Activated CD4-positive, alpha-beta memory T cell treated with anti-CD3 and anti-CD28 coated beads, Interleukin-2, amount 10 ng/mL, durations not matched to agents 7 days and 5 days (primary cell): ENCODE measurements at regions of chr1 and their contacts with region 1.

Region 1: GRCh38 chr1:234599617-234600417 is 10.2 kb downstream of the IRF2BP2 start:
- DNase-seq: peak; percentile 77
- H3K4me3 Mint-ChIP-seq: peak overlapping the region; percentile 85
- H3K27ac Mint-ChIP-seq: peak overlapping the region; percentile 96
- H3K4me1 Mint-ChIP-seq: peaks cover 52% of the 10 kb centered on the region
- H3K27me3 Mint-ChIP-seq: no peaks in the 10 kb centered on the region

Region 2: DNA sequence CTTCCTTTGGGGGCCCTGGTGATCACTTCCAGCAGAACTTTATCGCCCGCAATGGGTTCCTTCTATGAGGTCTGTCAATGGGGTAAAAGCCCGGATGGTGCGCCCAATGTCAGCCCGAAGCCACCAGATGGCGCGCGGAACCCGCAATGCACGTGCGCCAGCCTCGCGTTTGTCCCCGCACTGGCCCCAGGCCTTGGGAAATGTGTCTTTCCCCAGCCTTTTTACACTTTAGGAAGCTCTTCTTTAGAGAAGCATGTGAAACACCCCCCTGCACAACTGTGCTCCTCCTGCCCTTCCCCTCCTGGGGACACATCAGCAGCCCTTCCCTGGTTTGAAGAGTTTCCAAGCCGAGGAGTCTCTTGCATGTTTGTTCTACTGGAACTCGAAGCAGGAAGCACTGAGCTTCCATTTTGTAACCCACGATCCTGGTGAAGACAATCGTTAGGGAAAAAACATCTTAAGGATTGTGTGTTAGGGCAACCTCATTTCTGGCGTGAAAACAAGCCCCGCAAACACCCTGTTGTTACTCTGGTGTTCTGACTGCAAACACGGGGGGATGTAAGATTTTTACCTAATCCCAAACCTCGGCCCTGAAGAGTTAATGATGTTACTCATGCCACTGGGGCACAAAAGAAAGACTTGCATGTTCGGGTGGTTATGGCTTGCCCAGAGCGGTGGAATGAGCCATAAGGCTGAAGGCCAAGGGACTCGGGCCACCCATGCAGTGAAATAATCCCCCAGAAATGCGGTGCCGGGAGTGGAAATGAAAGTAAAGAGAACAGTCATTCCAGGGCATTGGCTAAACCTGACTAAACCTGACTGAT is 100.5 kb before region 1 on chr1:
- CTCF ChIA-PET with region 1: interaction called, 18 read pairs
- POLR2A ChIA-PET with region 1: interaction called, 9 read pairs
- DNase-seq: peak; percentile 88
- H3K4me3 Mint-ChIP-seq: peak overlapping the region; percentile 6
- H3K27ac Mint-ChIP-seq: peak overlapping the region; percentile 66
- H3K4me1 Mint-ChIP-seq: peaks cover 62% of the 10 kb centered on the region
- H3K27me3 Mint-ChIP-seq: no peaks in the 10 kb centered on the region

Region 3: GRCh38 chr1:234722904-234723720 is 123.3 kb after region 1 on chr1:
- CTCF ChIA-PET with region 1: interaction called, 13 read pairs
- POLR2A ChIA-PET with region 1: interaction called, 64 read pairs
- DNase-seq: peak; percentile 51
- H3K4me3 Mint-ChIP-seq: peak overlapping the region; percentile 76
- H3K27ac Mint-ChIP-seq: peak overlapping the region; percentile 89
- H3K4me1 Mint-ChIP-seq: peaks cover 67% of the 10 kb centered on the region
- H3K27me3 Mint-ChIP-seq: no peaks in the 10 kb centered on the region

Region 4: DNA sequence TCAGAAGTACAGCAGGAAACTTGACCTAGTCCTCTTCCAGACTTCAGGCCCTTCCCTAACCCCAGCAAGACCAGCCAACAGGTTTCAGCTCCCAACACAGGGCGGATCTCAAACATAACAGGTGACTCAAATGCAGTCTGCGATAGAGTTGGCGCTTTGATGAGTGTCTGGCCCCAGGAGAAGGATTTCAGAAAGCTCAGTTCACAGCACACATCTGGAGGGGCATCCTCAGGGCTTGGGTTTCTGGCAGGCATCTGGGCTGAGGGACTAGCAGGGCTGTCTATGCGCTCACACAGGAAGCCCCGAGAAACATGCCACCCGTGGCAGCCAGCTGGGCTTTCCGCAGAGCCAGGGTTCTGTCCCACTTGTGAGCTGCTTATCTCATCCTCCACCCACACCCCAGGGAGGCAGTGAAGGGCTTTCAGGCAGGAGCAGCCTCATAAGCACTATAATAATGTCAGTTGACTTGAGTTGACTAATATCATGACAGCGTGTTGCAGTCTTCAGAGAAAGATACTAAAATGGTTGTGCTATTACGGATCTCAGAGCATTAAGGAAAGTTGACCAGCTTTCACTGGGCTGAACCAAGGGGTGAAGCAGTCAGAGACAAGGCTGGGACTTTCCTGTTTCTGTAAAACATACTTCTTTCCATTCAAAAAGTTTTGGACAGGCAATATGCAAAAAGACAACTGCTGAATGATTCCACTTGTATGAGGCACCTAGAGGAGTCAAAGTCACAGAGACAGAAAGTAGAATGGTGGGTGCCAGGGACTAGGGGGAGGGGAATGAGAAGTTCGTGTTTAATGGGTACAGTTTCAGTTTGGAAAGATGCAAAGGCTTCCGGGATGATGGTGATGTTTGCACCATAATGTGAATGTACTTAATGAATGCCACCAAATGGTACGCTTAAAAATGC is 243.2 kb after region 1 on chr1:
- CTCF ChIA-PET with region 1: interaction called, 4 read pairs
- POLR2A ChIA-PET with region 1: interaction called, 33 read pairs
- DNase-seq: peak; percentile 73
- H3K4me3 Mint-ChIP-seq: peak overlapping the region; percentile 61
- H3K27ac Mint-ChIP-seq: peak overlapping the region; percentile 90
- H3K4me1 Mint-ChIP-seq: peaks cover 79% of the 10 kb centered on the region
- H3K27me3 Mint-ChIP-seq: peaks cover 2% of the 10 kb centered on the region

Region 5: GRCh38 chr1:234963180-234963903 is 363.5 kb after region 1 on chr1:
- CTCF ChIA-PET with region 1: interaction called, 3 read pairs
- POLR2A ChIA-PET with region 1: interaction called, 14 read pairs
- DNase-seq: peak; percentile 92
- H3K4me3 Mint-ChIP-seq: peak overlapping the region; percentile 38
- H3K27ac Mint-ChIP-seq: peak overlapping the region; percentile 89
- H3K4me1 Mint-ChIP-seq: peaks cover 65% of the 10 kb centered on the region
- H3K27me3 Mint-ChIP-seq: no peaks in the 10 kb centered on the region